GM12878 (cell line): ENCODE measurements at regions of chr2 and their contacts with region 1.

Region 1: GRCh38 chr2:17672583-17673317 is 80.9 kb downstream of the SMC6 start:
- DNase-seq: no peak
- ATAC-seq: peak; percentile 73
- H3K4me3 ChIP-seq: no peak overlapping the region
- H3K27ac ChIP-seq: no peak overlapping the region
- H3K4me1 ChIP-seq: no peaks in the 10 kb centered on the region
- H3K27me3 ChIP-seq: no peaks in the 10 kb centered on the region
- CTCF ChIP-seq: no peak
- EP300 ChIP-seq: no peak
- POLR2A ChIP-seq: no peak
- RAD21 ChIP-seq: no peak

Region 2: GRCh38 chr2:17012297-17012696 is 660.5 kb before region 1 on chr2:
- CTCF ChIA-PET with region 1: no interaction called
- POLR2A ChIA-PET with region 1: no interaction called
- RAD21 ChIA-PET with region 1: no interaction called
- SMC1A ChIA-PET with region 1: no interaction called
- in situ Hi-C with region 1: no loop called
- intact Hi-C with region 1: no loop called
- DNase-seq: no peak
- ATAC-seq: no peak
- H3K4me3 ChIP-seq: no peak overlapping the region
- H3K27ac ChIP-seq: no peak overlapping the region
- H3K4me1 ChIP-seq: no peaks in the 10 kb centered on the region
- H3K27me3 ChIP-seq: no peaks in the 10 kb centered on the region
- CTCF ChIP-seq: no peak
- EP300 ChIP-seq: no peak
- POLR2A ChIP-seq: no peak
- RAD21 ChIP-seq: no peak

Region 3: GRCh38 chr2:17309741-17310339 is 362.9 kb before region 1 on chr2:
- CTCF ChIA-PET with region 1: interaction called, 13 read pairs
- POLR2A ChIA-PET with region 1: no interaction called
- RAD21 ChIA-PET with region 1: interaction called, 10 read pairs
- SMC1A ChIA-PET with region 1: interaction called, 3 read pairs
- in situ Hi-C with region 1: no loop called
- intact Hi-C with region 1: loop called (anchors 5 kb)
- DNase-seq: no peak
- ATAC-seq: peak; percentile 94
- H3K4me3 ChIP-seq: no peak overlapping the region
- H3K27ac ChIP-seq: no peak overlapping the region
- H3K4me1 ChIP-seq: no peaks in the 10 kb centered on the region
- H3K27me3 ChIP-seq: no peaks in the 10 kb centered on the region
- CTCF ChIP-seq: peak; percentile 68 to 77 (median 71)
- EP300 ChIP-seq: no peak
- POLR2A ChIP-seq: no peak
- RAD21 ChIP-seq: peak; percentile 79

Region 4: GRCh38 chr2:17479875-17480274 is 192.9 kb before region 1 on chr2:
- CTCF ChIA-PET with region 1: interaction called, 7 read pairs
- POLR2A ChIA-PET with region 1: no interaction called
- RAD21 ChIA-PET with region 1: interaction called, 5 read pairs
- SMC1A ChIA-PET with region 1: interaction called, 5 read pairs
- in situ Hi-C with region 1: loop called (anchors 5 kb)
- intact Hi-C with region 1: no loop called
- DNase-seq: no peak
- ATAC-seq: no peak
- H3K4me3 ChIP-seq: no peak overlapping the region
- H3K27ac ChIP-seq: no peak overlapping the region
- H3K4me1 ChIP-seq: no peaks in the 10 kb centered on the region
- H3K27me3 ChIP-seq: no peaks in the 10 kb centered on the region; a peak in 1 of 4 replicates
- CTCF ChIP-seq: no peak
- EP300 ChIP-seq: no peak
- POLR2A ChIP-seq: no peak
- RAD21 ChIP-seq: no peak

Region 5: DNA sequence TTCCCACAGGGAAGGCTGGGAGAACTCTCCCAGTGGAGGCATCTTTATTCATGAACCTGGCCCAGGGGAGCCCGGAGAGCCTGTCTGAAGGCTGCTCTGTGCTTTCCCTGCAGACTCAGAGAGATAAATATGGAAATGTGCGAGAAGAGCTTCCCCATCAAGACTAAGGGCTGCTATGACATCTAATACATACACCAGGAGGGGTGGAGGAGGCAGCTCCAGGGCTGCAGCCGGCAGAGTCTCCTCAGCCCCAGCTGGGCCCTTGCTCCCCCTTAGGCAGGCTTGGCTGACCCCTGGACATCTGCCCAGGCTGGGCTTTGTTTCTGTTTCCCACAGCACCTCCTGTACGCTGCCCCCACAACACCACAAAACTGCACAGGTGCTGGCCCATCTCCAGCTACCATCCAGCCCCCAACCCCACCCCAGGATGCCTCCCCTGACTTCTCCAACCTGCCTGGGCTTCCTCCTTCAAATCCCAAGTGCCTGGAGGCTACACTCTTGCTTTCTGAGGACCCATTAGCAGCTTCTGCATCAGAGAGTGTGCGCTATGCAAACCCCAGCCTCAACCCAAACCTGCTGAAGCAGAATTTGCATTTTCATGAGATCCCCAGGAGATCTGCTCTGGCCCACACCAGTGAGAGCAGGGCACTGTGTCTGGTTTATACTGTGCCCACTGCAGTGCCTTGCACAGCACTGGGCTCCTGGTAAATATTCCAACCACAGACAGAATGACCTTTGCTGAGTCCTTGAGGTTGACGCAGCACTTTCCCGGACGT is 35.4 kb before region 1 on chr2:
- CTCF ChIA-PET with region 1: interaction called, 604 read pairs
- POLR2A ChIA-PET with region 1: interaction called, 3 read pairs
- RAD21 ChIA-PET with region 1: interaction called, 138 read pairs
- SMC1A ChIA-PET with region 1: interaction called, 165 read pairs
- in situ Hi-C with region 1: no loop called
- intact Hi-C with region 1: no loop called
- DNase-seq: no peak
- ATAC-seq: peak; percentile 38; the same call in 2 of the 3 replicates
- H3K4me3 ChIP-seq: no peak overlapping the region
- H3K27ac ChIP-seq: no peak overlapping the region
- H3K4me1 ChIP-seq: no peaks in the 10 kb centered on the region
- H3K27me3 ChIP-seq: no peaks in the 10 kb centered on the region
- CTCF ChIP-seq: no peak
- EP300 ChIP-seq: no peak
- POLR2A ChIP-seq: no peak
- RAD21 ChIP-seq: no peak

Region 6: GRCh38 chr2:17658251-17658843 is 14.4 kb before region 1 on chr2:
- CTCF ChIA-PET with region 1: interaction called, 604 read pairs
- POLR2A ChIA-PET with region 1: interaction called, 8 read pairs
- RAD21 ChIA-PET with region 1: interaction called, 13 read pairs
- SMC1A ChIA-PET with region 1: interaction called, 80 read pairs
- in situ Hi-C with region 1: no loop called
- intact Hi-C with region 1: no loop called
- DNase-seq: peak; percentile 64
- ATAC-seq: peak; percentile 95
- H3K4me3 ChIP-seq: no peak overlapping the region
- H3K27ac ChIP-seq: peak overlapping the region; percentile 57
- H3K4me1 ChIP-seq: peaks cover 15% of the 10 kb centered on the region
- H3K27me3 ChIP-seq: no peaks in the 10 kb centered on the region
- CTCF ChIP-seq: no peak
- EP300 ChIP-seq: peak in 1 of 2 experiments; percentile 33; a peak in 1 of 4 replicates
- POLR2A ChIP-seq: no peak
- RAD21 ChIP-seq: no peak